H1 (cell line): ENCODE measurements at regions of chr15 and their contacts with region 1.

Region 1: GRCh38 chr15:88610701-88611231 is 10.4 kb upstream of the AEN start:
- DNase-seq: no peak
- H3K4me3 ChIP-seq: no peak overlapping the region
- H3K27ac ChIP-seq: no peak overlapping the region
- H3K4me1 ChIP-seq: peaks cover 27 to 42% (median 31%) of the 10 kb centered on the region in 4 experiments
- H3K27me3 ChIP-seq: peaks cover 8 to 34% (median 28%) of the 10 kb centered on the region in 4 experiments
- CTCF ChIP-seq: peak; percentile 27 to 41 (median 28); a peak in 3 of 4 replicates
- EP300 ChIP-seq: no peak
- POLR2A ChIP-seq: no peak
- RAD21 ChIP-seq: peak; percentile 6 to 25; a peak in 1 of 4 replicates

Region 2: GRCh38 chr15:88467073-88467934 is 143.5 kb before region 1 on chr15 and contains the starts of genes MRPL46 and MRPS11:
- CTCF ChIA-PET with region 1: interaction called, 25 read pairs
- POLR2A ChIA-PET with region 1: interaction called, 14 read pairs
- DNase-seq: peak in 1 of 2 experiments; percentile 95
- H3K4me3 ChIP-seq: peak within 1 kb of the TSS; percentile 69 to 98 (median 88)
- H3K27ac ChIP-seq: peak within 1 kb of the TSS; percentile 95
- H3K4me1 ChIP-seq: no peaks in the 10 kb centered on the region; a peak in 1 of 7 replicates
- H3K27me3 ChIP-seq: no peaks in the 10 kb centered on the region
- CTCF ChIP-seq: no peak
- EP300 ChIP-seq: peak in 1 of 2 experiments; percentile 100; a peak in 2 of 3 replicates
- POLR2A ChIP-seq: peak; percentile 87 to 96
- RAD21 ChIP-seq: no peak
- total RNA-seq, gene MRPL46: 24.4 and 24.5 TPM in 2 replicates
- total RNA-seq, gene MRPS11: 41.4 and 50.4 TPM in 2 replicates

Region 3: GRCh38 chr15:88476635-88477060 is 134.1 kb before region 1 on chr15:
- CTCF ChIA-PET with region 1: interaction called, 31 read pairs
- POLR2A ChIA-PET with region 1: interaction called, 4 read pairs
- DNase-seq: no peak
- H3K4me3 ChIP-seq: no peak overlapping the region
- H3K27ac ChIP-seq: no peak overlapping the region
- H3K4me1 ChIP-seq: no peaks in the 10 kb centered on the region
- H3K27me3 ChIP-seq: no peaks in the 10 kb centered on the region
- CTCF ChIP-seq: peak; percentile 11 to 81 (median 70)
- EP300 ChIP-seq: no peak
- POLR2A ChIP-seq: no peak
- RAD21 ChIP-seq: peak; percentile 90 to 92

Region 4: GRCh38 chr15:88484682-88485331 is 126.0 kb before region 1 on chr15:
- CTCF ChIA-PET with region 1: interaction called, 41 read pairs
- POLR2A ChIA-PET with region 1: interaction called, 4 read pairs
- DNase-seq: no peak
- H3K4me3 ChIP-seq: peak overlapping the region in 1 of 4 experiments; percentile 5; a peak in 2 of 8 replicates
- H3K27ac ChIP-seq: no peak overlapping the region
- H3K4me1 ChIP-seq: peaks cover 2 to 14% (median 9%) of the 10 kb centered on the region in 4 experiments
- H3K27me3 ChIP-seq: no peaks in the 10 kb centered on the region; a peak in 2 of 7 replicates
- CTCF ChIP-seq: no peak
- EP300 ChIP-seq: no peak
- POLR2A ChIP-seq: no peak
- RAD21 ChIP-seq: no peak

Region 5: GRCh38 chr15:88491158-88491557 is 119.6 kb before region 1 on chr15:
- CTCF ChIA-PET with region 1: interaction called, 41 read pairs
- POLR2A ChIA-PET with region 1: interaction called, 4 read pairs
- DNase-seq: no peak
- H3K4me3 ChIP-seq: no peak overlapping the region
- H3K27ac ChIP-seq: no peak overlapping the region
- H3K4me1 ChIP-seq: peaks cover 0 to 11% (median 0%) of the 10 kb centered on the region in 4 experiments; a peak in 2 of 7 replicates
- H3K27me3 ChIP-seq: no peaks in the 10 kb centered on the region; a peak in 1 of 7 replicates
- CTCF ChIP-seq: no peak
- EP300 ChIP-seq: no peak
- POLR2A ChIP-seq: no peak
- RAD21 ChIP-seq: no peak

Region 6: GRCh38 chr15:88620995-88621772 is 10.4 kb after region 1 on chr15 and contains the start of gene AEN:
- CTCF ChIA-PET with region 1: interaction called, 4 read pairs
- POLR2A ChIA-PET with region 1: interaction called, 61 read pairs
- DNase-seq: peak; percentile 91 to 95
- H3K4me3 ChIP-seq: peak within 1 kb of the TSS; percentile 81 to 99 (median 97)
- H3K27ac ChIP-seq: peak within 1 kb of the TSS; percentile 92
- H3K4me1 ChIP-seq: peaks cover 12 to 24% (median 16%) of the 10 kb centered on the region in 4 experiments
- H3K27me3 ChIP-seq: no peaks in the 10 kb centered on the region
- CTCF ChIP-seq: no peak
- EP300 ChIP-seq: no peak
- POLR2A ChIP-seq: peak; percentile 83 to 96
- RAD21 ChIP-seq: no peak
- total RNA-seq, gene AEN: 122 and 125 TPM in 2 replicates

Region 7: GRCh38 chr15:88638626-88639372 is 28.0 kb after region 1 on chr15 and contains the start of gene ISG20:
- CTCF ChIA-PET with region 1: interaction called, 4 read pairs
- POLR2A ChIA-PET with region 1: interaction called, 14 read pairs
- DNase-seq: peak; percentile 86 to 87
- H3K4me3 ChIP-seq: peak within 1 kb of the TSS; percentile 1 to 44 (median 16); a peak in 6 of 8 replicates
- H3K27ac ChIP-seq: peak within 1 kb of the TSS; percentile 48; the same call in 1 of the 2 replicates
- H3K4me1 ChIP-seq: peaks cover 5 to 19% (median 16%) of the 10 kb centered on the region in 4 experiments
- H3K27me3 ChIP-seq: no peaks in the 10 kb centered on the region
- CTCF ChIP-seq: peak; percentile 51 to 56 (median 54)
- EP300 ChIP-seq: peak in 1 of 2 experiments; percentile 86; a peak in 1 of 3 replicates
- POLR2A ChIP-seq: peak; percentile 28 to 80
- RAD21 ChIP-seq: peak; percentile 25 to 48; a peak in 3 of 4 replicates
- total RNA-seq, gene ISG20: 2.9 and 4.0 TPM in 2 replicates

Region 8: GRCh38 chr15:88849376-88850072 is 238.8 kb after region 1 on chr15:
- CTCF ChIA-PET with region 1: no interaction called
- POLR2A ChIA-PET with region 1: no interaction called
- DNase-seq: no peak
- H3K4me3 ChIP-seq: no peak overlapping the region
- H3K27ac ChIP-seq: no peak overlapping the region
- H3K4me1 ChIP-seq: no peaks in the 10 kb centered on the region
- H3K27me3 ChIP-seq: no peaks in the 10 kb centered on the region
- CTCF ChIP-seq: no peak
- EP300 ChIP-seq: no peak
- POLR2A ChIP-seq: no peak
- RAD21 ChIP-seq: no peak

Region 9: DNA sequence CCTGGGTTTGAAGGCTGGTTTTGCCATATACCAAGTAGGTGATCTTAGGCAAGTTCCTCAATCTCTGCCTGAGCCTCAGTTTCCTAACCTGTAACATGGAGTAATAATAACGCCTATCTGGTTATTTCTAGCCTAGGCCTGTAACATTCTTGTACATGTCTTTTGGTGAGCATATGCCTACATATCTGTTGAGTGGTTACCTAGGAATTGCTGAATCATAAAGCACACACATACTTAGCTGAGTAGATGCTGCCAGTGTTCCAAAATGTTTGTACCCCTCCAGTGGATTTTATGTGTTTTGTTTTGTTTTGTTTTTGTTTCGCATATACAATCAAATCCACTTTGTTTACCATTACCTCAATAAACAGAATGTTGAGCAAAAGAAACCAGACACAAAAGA is 319.8 kb after region 1 on chr15:
- CTCF ChIA-PET with region 1: no interaction called
- POLR2A ChIA-PET with region 1: no interaction called
- DNase-seq: no peak
- H3K4me3 ChIP-seq: no peak overlapping the region
- H3K27ac ChIP-seq: no peak overlapping the region
- H3K4me1 ChIP-seq: no peaks in the 10 kb centered on the region
- H3K27me3 ChIP-seq: no peaks in the 10 kb centered on the region
- CTCF ChIP-seq: no peak
- EP300 ChIP-seq: no peak
- POLR2A ChIP-seq: no peak
- RAD21 ChIP-seq: no peak